IMR-90 (cell line): ENCODE measurements at regions of chr15 and their contacts with region 1.

Region 1: DNA sequence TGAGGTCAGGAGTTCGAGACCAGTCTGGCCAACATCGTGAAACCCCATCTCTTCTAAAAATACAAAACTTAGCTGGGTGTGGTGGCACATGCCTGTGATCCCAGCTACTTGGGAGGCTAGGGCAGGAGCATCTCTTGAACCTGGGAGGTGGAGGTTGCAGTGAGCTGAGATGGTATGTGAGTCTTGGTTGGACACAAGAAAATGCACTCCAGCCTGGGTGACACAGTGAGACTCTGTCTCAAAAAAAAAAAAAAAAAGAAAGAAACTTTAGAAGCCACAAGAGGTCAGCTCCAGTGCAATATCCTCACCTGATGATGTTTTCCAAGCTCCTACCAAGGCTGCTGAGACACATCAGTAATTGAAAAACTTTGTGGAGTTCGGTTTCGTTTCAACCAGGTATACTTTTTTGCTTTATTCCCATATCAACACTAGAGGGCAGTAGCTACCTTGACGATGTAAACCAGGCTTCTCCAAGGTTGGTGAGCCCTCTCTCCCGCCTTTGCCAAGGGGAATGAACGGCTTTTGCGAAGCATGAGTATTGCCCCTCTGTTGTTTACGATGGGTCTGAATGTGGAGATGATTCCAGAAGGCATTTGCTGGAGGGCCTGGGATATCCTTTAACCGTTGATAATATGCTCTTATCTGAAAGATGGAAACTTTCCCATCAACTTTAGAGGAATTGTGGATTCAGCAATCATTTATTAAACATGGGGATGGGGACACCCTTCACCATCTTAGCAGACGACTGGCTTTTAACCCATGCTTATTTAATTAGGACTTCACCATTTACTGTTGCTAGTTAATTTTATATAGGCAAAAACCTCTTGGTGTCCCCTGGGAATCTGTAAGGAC is 202.8 kb downstream of the SV2B start:
- DNase-seq: peak; percentile 63
- ATAC-seq: peak; percentile 87
- H3K4me3 ChIP-seq: no peak overlapping the region
- H3K27ac ChIP-seq: no peak overlapping the region
- H3K4me1 ChIP-seq: no peaks in the 10 kb centered on the region
- H3K27me3 ChIP-seq: peaks cover 25% of the 10 kb centered on the region
- CTCF ChIP-seq: peak; percentile 84
- POLR2A ChIP-seq: no peak
- RAD21 ChIP-seq: peak; percentile 95

Region 2: GRCh38 chr15:90716976-90717821 is 585.6 kb before region 1 on chr15 and contains the start of gene BLM:
- CTCF ChIA-PET with region 1: no interaction called
- POLR2A ChIA-PET with region 1: no interaction called
- dilution Hi-C with region 1: no loop called
- in situ Hi-C with region 1: no loop called
- intact Hi-C with region 1: no loop called
- DNase-seq: peak; percentile 97
- ATAC-seq: peak; percentile 100
- H3K4me3 ChIP-seq: peak within 1 kb of the TSS; percentile 63
- H3K27ac ChIP-seq: peak within 1 kb of the TSS; percentile 69
- H3K4me1 ChIP-seq: peaks cover 2% of the 10 kb centered on the region; the same call in 1 of the 2 replicates
- H3K27me3 ChIP-seq: no peaks in the 10 kb centered on the region
- CTCF ChIP-seq: peak; percentile 20; the same call in 1 of the 2 replicates
- POLR2A ChIP-seq: peak; percentile 84
- RAD21 ChIP-seq: no peak
- total RNA-seq, gene BLM: 6.5 and 7.2 TPM in 2 replicates

Region 3: GRCh38 chr15:91116113-91117067 is 186.4 kb before region 1 on chr15:
- CTCF ChIA-PET with region 1: no interaction called
- POLR2A ChIA-PET with region 1: no interaction called
- dilution Hi-C with region 1: no loop called
- in situ Hi-C with region 1: no loop called
- intact Hi-C with region 1: no loop called
- DNase-seq: no peak
- ATAC-seq: no peak
- H3K4me3 ChIP-seq: no peak overlapping the region
- H3K27ac ChIP-seq: no peak overlapping the region
- H3K4me1 ChIP-seq: no peaks in the 10 kb centered on the region
- H3K27me3 ChIP-seq: peaks cover 3% of the 10 kb centered on the region
- CTCF ChIP-seq: no peak
- POLR2A ChIP-seq: no peak
- RAD21 ChIP-seq: no peak

Region 4: DNA sequence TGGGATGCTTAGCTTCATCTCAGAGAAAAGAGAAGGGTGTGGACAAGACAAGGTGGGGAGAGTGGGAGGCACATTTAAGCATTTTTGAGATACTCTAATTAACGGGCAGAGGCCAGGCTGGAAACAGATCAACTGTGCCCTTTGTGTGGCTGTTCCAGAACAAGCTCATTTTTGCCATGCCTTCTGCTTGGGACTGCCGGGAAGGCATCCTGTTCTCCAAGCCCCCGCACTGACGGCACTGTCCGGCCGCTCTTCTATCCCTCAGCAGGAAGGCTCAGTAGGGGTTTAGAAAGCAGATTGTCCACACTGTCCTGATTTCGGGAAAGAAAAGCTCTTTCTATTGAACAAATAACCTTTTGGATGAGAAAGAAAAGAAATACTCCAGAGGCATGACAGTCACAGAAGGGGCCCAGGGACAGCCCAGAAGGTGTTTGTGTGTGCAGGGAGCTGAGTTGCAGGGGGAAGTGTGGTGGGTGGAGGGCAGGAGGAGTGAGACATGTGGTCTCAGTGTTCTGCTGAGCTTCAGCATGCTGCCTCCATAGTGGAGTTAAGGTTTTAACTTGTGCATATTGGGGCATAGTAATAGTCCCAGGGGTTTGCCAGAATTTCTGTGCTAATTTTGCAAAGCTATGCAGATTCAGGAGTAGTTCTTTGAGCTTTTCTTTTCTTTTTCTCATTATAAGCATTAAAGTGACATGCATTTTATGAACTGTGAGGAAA is 175.4 kb before region 1 on chr15:
- CTCF ChIA-PET with region 1: no interaction called
- POLR2A ChIA-PET with region 1: no interaction called
- dilution Hi-C with region 1: no loop called
- in situ Hi-C with region 1: no loop called
- intact Hi-C with region 1: no loop called
- DNase-seq: no peak
- ATAC-seq: no peak
- H3K4me3 ChIP-seq: no peak overlapping the region
- H3K27ac ChIP-seq: no peak overlapping the region
- H3K4me1 ChIP-seq: no peaks in the 10 kb centered on the region
- H3K27me3 ChIP-seq: peaks cover 2% of the 10 kb centered on the region; the same call in 1 of the 2 replicates
- CTCF ChIP-seq: no peak
- POLR2A ChIP-seq: no peak
- RAD21 ChIP-seq: no peak

Region 5: GRCh38 chr15:91522663-91523332 is 220.0 kb after region 1 on chr15:
- CTCF ChIA-PET with region 1: no interaction called
- POLR2A ChIA-PET with region 1: no interaction called
- dilution Hi-C with region 1: no loop called
- in situ Hi-C with region 1: loop called (anchors 5 kb)
- intact Hi-C with region 1: loop called (anchors 1 kb)
- DNase-seq: peak; percentile 80
- ATAC-seq: peak; percentile 81
- H3K4me3 ChIP-seq: no peak overlapping the region
- H3K27ac ChIP-seq: no peak overlapping the region
- H3K4me1 ChIP-seq: peaks cover 9% of the 10 kb centered on the region
- H3K27me3 ChIP-seq: no peaks in the 10 kb centered on the region
- CTCF ChIP-seq: peak; percentile 94
- POLR2A ChIP-seq: peak; percentile 62; the same call in 1 of the 2 replicates
- RAD21 ChIP-seq: peak; percentile 97

Region 6: DNA sequence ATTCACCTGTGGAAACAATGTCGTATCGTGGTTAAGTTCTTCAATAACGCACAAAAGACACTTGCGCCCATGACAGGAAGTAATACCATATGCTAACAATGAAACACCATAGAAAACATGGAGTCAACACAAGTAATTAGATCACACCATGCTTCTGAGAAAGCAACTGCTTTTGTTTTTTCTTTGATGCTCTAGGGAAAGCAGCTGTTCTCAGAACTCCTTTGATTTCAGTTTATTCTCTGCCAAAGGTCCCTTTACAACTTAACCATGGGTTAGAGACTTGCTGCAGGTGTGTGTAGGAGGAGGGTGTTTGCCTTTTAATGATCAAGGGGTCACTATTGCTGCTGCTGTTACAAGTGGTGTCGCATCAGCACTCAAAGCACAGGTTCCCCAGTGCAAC is 226.7 kb after region 1 on chr15:
- CTCF ChIA-PET with region 1: no interaction called
- POLR2A ChIA-PET with region 1: no interaction called
- dilution Hi-C with region 1: no loop called
- in situ Hi-C with region 1: loop called (anchors 5 kb)
- intact Hi-C with region 1: no loop called
- DNase-seq: no peak
- ATAC-seq: no peak
- H3K4me3 ChIP-seq: no peak overlapping the region
- H3K27ac ChIP-seq: no peak overlapping the region
- H3K4me1 ChIP-seq: no peaks in the 10 kb centered on the region
- H3K27me3 ChIP-seq: peaks cover 5% of the 10 kb centered on the region
- CTCF ChIP-seq: no peak
- POLR2A ChIP-seq: no peak
- RAD21 ChIP-seq: no peak

Region 7: DNA sequence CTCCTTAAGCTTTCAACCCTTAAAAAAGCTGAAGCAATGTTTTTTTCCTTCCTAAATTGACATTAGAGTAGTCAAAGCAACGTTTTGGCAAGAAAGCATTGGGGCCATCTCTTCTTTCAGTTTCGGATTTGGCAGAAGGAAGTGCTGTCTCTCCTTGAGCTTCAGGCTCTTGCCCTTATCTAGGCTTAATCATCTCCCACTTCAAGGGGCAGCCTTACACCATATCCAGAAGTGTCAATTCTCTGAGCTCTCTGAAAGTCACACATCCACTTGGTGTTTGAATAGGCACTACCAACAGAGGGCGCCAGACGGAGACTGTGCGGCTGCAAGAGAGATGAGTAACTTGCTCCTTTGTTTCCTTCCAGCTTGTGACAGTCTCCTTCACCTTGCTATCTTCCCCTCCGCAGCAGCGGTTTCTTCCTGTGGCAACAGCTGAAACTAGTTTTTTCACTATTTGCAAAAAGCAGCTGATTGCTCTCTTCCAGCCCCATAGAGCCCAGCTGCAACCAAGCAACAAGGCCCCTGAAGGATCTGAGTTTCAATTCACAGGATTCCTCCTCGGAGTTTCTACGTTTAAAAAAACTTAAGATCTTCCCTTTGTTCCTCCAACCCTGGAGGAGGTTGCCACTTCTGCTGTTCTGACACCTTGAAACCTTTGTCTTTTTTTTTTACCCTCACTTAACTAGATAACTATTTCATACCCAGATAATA is 403.7 kb after region 1 on chr15:
- CTCF ChIA-PET with region 1: interaction called, 5 read pairs
- POLR2A ChIA-PET with region 1: no interaction called
- dilution Hi-C with region 1: no loop called
- in situ Hi-C with region 1: no loop called
- intact Hi-C with region 1: loop called (anchors 1 kb)
- DNase-seq: peak; percentile 63
- ATAC-seq: peak; percentile 72
- H3K4me3 ChIP-seq: no peak overlapping the region
- H3K27ac ChIP-seq: no peak overlapping the region
- H3K4me1 ChIP-seq: no peaks in the 10 kb centered on the region
- H3K27me3 ChIP-seq: no peaks in the 10 kb centered on the region
- CTCF ChIP-seq: peak; percentile 71
- POLR2A ChIP-seq: no peak
- RAD21 ChIP-seq: peak; percentile 62

Region 8: DNA sequence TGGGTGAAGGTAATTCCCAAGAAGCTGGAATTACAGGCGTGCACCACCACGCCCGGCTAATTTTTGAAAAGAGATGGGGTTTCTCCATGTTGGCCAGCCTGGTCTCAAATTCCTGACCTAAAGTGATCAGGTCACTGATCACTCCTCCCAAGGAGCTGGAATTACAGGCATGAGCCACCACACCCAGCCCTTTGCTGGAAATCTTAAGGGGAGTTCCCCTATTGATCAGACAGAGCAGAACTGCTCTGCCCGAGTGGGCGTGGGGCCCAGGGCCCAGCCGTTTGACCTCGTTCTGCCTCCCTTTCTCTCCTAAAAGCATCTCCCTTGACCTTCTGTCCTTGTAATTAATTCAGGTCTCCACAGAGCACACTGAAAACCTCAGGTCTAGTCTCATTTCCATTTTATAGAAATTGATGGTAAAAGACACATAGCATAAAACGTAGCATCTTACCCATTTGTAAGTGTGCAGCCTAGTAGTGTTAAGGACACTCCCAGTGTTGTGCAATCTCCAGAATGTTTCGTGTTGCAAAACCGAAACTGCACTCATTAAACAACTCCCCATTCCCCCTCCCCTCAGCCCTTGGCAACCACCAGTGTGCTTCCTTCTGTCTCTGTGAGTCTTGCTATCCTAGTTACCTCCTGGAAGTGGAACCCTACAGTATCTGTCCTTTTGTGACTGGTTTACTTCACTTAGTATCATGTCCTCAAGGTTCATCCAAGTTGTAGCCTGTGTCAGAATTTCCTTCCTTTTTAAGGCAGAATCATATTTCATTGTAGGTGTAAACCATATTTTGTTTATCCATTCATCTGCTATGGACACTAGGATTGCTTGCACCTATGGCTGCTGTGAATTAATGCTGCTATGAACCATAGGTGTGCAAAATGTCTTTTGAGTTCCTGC is 640.1 kb after region 1 on chr15:
- CTCF ChIA-PET with region 1: interaction called, 5 read pairs
- POLR2A ChIA-PET with region 1: no interaction called
- dilution Hi-C with region 1: no loop called
- in situ Hi-C with region 1: no loop called
- intact Hi-C with region 1: loop called (anchors 10 kb)
- DNase-seq: peak; percentile 89
- ATAC-seq: peak; percentile 93
- H3K4me3 ChIP-seq: no peak overlapping the region
- H3K27ac ChIP-seq: peak overlapping the region; percentile 21; the same call in 1 of the 2 replicates
- H3K4me1 ChIP-seq: peaks cover 5% of the 10 kb centered on the region; the same call in 1 of the 2 replicates
- H3K27me3 ChIP-seq: no peaks in the 10 kb centered on the region
- CTCF ChIP-seq: no peak
- POLR2A ChIP-seq: no peak
- RAD21 ChIP-seq: no peak